ENCODE measurements at regions of chr10 and their contacts with region 1.

Region 1: DNA sequence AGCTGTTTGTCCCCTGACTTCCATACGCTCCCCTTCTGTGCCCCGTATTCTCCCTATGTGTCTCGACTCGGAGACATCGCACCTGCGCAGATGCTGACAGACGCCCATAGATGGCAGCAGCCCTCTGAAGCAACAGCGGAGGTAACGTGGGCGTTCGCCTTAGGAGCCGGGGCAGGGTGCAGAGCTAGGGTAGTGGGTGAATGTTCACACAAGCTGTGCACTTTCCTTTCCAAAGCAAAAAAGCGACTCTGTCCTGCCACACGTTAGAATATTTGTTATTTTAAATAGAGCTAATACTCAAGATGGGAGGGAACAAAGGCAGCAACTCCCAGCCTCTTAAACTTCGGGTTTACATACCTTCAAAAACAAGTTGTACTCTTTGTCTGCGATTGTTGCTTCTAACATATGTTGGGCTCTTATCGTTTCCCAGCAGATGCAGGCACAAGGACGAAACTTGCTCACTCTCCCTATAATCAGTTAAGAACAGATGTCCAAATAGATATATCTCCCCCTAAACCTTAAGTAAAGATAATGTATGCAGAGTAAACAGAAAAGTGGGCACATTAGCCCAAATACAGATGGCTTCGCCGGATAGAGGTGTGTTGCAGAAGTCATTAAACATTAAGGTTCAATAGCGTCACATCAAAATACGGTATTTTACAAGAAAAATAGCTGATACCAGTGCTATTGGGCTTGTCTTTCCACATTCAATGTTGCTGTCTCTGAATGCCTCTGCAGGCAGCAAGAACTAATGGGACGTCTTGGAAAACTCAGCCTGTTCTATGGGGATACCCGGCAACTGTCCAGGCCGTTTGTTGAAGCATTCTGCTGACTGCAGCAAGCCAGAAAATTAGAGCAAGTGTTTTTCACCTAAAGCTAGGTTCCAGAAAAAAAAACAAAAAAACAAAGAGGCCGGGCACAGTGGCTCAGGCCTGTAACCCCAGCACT is 340.3 kb upstream of the PRKCQ start:
- DNase-seq: peak; percentile 79
- H3K4me3 Mint-ChIP-seq: no peak overlapping the region
- H3K27ac Mint-ChIP-seq: no peak overlapping the region
- H3K4me1 Mint-ChIP-seq: peaks cover 25% of the 10 kb centered on the region
- H3K27me3 Mint-ChIP-seq: no peaks in the 10 kb centered on the region
- CTCF ChIP-seq: peak; percentile 82

Region 2: GRCh38 chr10:7121154-7121810 is 200.9 kb after region 1 on chr10:
- CTCF ChIA-PET with region 1: interaction called, 3 read pairs
- POLR2A ChIA-PET with region 1: no interaction called
- intact Hi-C with region 1: loop called (anchors 2 kb)
- DNase-seq: peak; percentile 62
- H3K4me3 Mint-ChIP-seq: no peak overlapping the region
- H3K27ac Mint-ChIP-seq: no peak overlapping the region
- H3K4me1 Mint-ChIP-seq: peaks cover 8% of the 10 kb centered on the region
- H3K27me3 Mint-ChIP-seq: peaks cover 43% of the 10 kb centered on the region
- CTCF ChIP-seq: peak; percentile 61

Region 3: DNA sequence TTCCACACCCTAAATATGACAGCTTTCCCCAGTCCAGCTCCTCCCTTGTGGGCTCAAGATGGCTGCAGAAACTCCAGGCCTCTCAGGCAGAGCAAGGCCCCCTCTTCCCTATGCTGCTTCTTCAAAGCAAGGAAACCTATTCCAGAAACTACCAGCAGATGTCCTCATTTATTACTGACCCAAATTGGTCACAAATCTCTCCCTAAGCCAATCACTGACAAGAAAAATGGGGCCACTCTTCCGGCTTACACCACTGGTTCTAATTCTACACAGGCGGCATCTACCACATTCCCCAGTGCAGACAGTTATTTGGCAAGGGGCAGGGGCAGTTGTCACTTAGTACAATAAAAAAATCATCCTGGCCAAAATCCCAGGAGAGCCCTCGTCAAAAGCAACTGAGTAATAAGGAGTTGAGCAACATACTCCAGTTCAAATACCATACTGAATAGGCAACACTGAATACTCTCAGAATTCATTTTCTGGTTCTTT is 340.1 kb after region 1 on chr10:
- CTCF ChIA-PET with region 1: interaction called, 6 read pairs
- POLR2A ChIA-PET with region 1: interaction called, 4 read pairs
- intact Hi-C with region 1: loop called (anchors 10 kb)
- DNase-seq: peak; percentile 97
- H3K4me3 Mint-ChIP-seq: peak overlapping the region; percentile 29
- H3K27ac Mint-ChIP-seq: peak overlapping the region; percentile 47
- H3K4me1 Mint-ChIP-seq: peaks cover 46% of the 10 kb centered on the region
- H3K27me3 Mint-ChIP-seq: no peaks in the 10 kb centered on the region
- CTCF ChIP-seq: peak; percentile 52

Region 4: GRCh38 chr10:7417103-7417623 is 496.8 kb after region 1 on chr10:
- CTCF ChIA-PET with region 1: interaction called, 28 read pairs
- POLR2A ChIA-PET with region 1: interaction called, 4 read pairs
- intact Hi-C with region 1: loop called (anchors 1 kb)
- DNase-seq: peak; percentile 55
- H3K4me3 Mint-ChIP-seq: no peak overlapping the region
- H3K27ac Mint-ChIP-seq: no peak overlapping the region
- H3K4me1 Mint-ChIP-seq: no peaks in the 10 kb centered on the region
- H3K27me3 Mint-ChIP-seq: peaks cover 28% of the 10 kb centered on the region
- CTCF ChIP-seq: peak; percentile 65

Measured in MCF 10A (cell line).